ENCODE measurements at regions of chr14 and their contacts with region 1.

Region 1: GRCh38 chr14:92520092-92520745 is 6.6 kb downstream of the RIN3 start:
- DNase-seq: no peak
- H3K4me3 ChIP-seq: no peak overlapping the region
- H3K27me3 ChIP-seq: no peaks in the 10 kb centered on the region
- CTCF ChIP-seq: no peak

Region 2: DNA sequence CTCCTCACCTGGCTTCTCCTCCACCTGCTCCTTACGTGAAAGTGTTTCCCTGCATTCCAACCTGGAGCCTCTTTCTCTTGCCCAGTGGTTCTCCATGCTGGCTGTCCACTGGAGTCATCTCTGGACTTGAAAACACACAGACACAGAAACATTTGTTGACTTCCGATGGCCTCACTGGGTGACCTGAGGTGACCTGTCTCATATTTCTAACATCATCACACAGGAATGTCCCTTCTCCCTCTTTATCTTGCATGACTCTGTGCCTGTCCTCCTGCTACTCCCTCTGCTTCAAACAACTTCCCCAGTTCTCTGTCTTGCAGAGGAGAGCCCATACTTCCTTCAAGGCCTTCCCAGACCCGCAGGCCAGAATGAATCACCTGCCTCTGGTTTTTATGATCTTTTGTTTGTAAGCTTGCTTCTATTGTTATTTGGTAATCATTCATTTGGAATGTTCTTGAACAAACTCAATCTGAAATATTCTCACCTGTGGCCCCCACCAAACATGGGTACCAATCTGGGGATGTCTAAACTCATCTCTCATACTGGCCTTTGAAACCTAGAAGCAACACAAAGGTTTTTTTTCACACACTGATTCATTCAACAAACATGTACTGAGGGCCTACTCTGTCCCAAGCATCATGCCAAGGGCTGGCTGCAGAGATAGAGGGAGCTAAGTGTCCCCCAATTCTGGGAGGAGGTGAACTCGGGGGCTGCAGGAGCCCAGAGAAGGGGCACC is 16.3 kb before region 1 on chr14:
- CTCF ChIA-PET with region 1: no interaction called
- POLR2A ChIA-PET with region 1: no interaction called
- DNase-seq: peak; percentile 69
- H3K4me3 ChIP-seq: no peak overlapping the region
- H3K27me3 ChIP-seq: no peaks in the 10 kb centered on the region
- CTCF ChIP-seq: 0 out of 2 replicates have a peak, but pooled peaks have one; percentile 21

Region 3: GRCh38 chr14:92531106-92531873 is 11.1 kb after region 1 on chr14:
- CTCF ChIA-PET with region 1: no interaction called
- POLR2A ChIA-PET with region 1: interaction called, 32 read pairs
- DNase-seq: no peak
- H3K4me3 ChIP-seq: no peak overlapping the region
- H3K27me3 ChIP-seq: no peaks in the 10 kb centered on the region
- CTCF ChIP-seq: no peak

Region 4: DNA sequence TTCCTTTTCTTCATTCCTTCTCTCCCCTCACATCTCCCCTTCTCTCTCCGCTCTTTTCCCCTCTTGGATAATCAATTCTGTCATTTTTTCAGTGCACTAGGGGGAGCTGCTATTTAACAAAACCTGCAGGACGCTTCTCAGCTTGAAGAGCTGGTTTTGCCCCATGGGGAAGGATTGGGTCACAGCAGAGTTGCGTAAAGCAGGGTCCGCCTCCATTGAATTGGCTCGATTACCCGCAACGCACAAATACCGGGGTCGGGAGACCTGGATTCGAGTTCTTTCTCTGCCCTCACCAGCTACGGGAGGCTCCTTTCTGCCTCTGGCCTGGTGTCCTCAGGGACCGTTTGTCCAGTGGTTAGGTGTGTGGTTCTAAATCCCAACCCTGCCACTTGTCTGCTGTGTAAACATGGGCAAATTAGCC is 360.7 kb after region 1 on chr14:
- CTCF ChIA-PET with region 1: no interaction called
- POLR2A ChIA-PET with region 1: no interaction called
- DNase-seq: no peak
- H3K4me3 ChIP-seq: no peak overlapping the region
- H3K27me3 ChIP-seq: peaks cover 9% of the 10 kb centered on the region
- CTCF ChIP-seq: peak; percentile 30

Measured in BJ (cell line).